ENCODE measurements at regions of chr11 and their contacts with region 1.

Region 1: GRCh38 chr11:64787526-64788320 is 9.4 kb upstream of the SF1 start:
- DNase-seq: peak; percentile 34 to 62
- ATAC-seq: peak in 6 of 8 donors; percentile 54 to 67 (median 61)
- H3K4me3 ChIP-seq: no peak overlapping the region
- H3K27ac ChIP-seq: peak overlapping the region in 1 of 10 donors; percentile 11
- H3K4me1 ChIP-seq: peaks cover 0 to 7% (median 0%) of the 10 kb centered on the region in 9 donors
- H3K27me3 ChIP-seq: no peaks in the 10 kb centered on the region
- CTCF ChIP-seq: peak; percentile 41 to 83 (median 67)

Region 2: DNA sequence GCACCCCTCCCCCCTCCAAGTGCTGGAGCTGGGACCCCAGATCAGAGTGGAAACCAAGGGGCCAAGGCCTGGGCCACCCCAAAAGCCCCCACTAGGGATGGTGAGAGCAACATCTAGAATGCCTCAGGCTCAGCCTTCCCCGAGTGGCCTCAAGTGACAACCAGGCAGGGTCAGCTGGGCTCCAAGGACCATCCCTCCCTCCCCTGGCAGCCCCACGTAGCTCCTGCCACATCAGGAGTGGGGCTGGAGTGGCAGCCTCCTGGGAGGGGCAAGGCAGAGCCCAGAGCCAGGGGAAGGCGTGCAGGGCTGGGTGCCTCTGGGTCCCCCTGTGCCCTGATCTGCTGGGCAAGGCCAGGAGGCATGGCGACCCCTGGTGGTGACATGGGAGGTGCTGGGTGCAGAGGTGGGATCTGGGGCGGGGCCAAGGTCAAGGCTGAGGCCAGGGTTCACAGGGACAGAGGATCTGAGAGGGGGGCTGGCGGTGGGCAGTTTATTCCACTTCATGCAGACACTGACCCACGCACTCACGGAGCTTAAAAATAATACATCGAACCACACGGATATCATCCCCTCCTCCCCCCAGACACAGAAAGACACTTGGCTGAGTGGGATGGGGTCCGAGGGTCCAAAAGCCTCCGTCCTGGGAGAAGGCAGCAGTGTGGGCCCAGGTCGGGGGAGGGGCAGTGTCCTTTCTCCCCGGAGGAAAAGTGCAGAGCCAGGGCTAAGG is 106.5 kb after region 1 on chr11:
- intact Hi-C with region 1: loop called in 2 of 10 experiments (anchors 10 kb)
- DNase-seq: peak; percentile 88 to 92
- ATAC-seq: peak; percentile 81 to 89 (median 86)
- H3K4me3 ChIP-seq: no peak overlapping the region
- H3K27ac ChIP-seq: peak overlapping the region in 7 of 10 donors; percentile 3 to 77 (median 68)
- H3K4me1 ChIP-seq: peaks cover 10 to 40% (median 26%) of the 10 kb centered on the region in 9 donors
- H3K27me3 ChIP-seq: no peaks in the 10 kb centered on the region
- CTCF ChIP-seq: peak; percentile 81 to 97 (median 91)

Measured in heart right ventricle (tissue), 16 donors.